ENCODE measurements at regions of chr6 and their contacts with region 1.

Region 1: GRCh38 chr6:136643850-136644596 is 93.8 kb upstream of the MAP7 start:
- DNase-seq: peak; percentile 46
- H3K4me3 ChIP-seq: no peak overlapping the region
- CTCF ChIP-seq: peak; percentile 86

Region 2: GRCh38 chr6:136582711-136583471 is 61.1 kb before region 1 on chr6:
- CTCF ChIA-PET with region 1: interaction called, 32 read pairs
- POLR2A ChIA-PET with region 1: no interaction called
- DNase-seq: peak; percentile 63
- H3K4me3 ChIP-seq: no peak overlapping the region
- CTCF ChIP-seq: peak; percentile 19

Region 3: GRCh38 chr6:136607932-136608772 is 35.9 kb before region 1 on chr6:
- CTCF ChIA-PET with region 1: interaction called, 26 read pairs
- POLR2A ChIA-PET with region 1: interaction called, 5 read pairs
- DNase-seq: no peak
- H3K4me3 ChIP-seq: no peak overlapping the region
- CTCF ChIP-seq: peak; percentile 68

Region 4: DNA sequence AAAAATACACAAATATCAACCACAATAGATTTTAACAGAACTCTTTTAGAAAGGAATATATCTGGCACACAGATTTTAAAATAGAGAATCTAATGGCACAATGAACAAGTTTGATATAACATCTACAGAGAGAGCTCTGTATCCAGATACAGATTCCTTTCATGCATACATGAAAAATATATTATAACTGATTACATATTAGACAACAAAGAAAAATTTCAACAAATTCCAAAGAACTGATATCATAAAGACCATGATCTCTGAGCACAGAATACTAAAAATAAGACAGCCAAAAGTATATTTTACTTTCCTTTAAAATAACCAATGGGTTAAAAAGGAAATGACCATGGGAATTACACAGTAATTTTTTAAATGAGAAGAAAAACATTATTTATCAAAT is 19.7 kb before region 1 on chr6:
- CTCF ChIA-PET with region 1: interaction called, 50 read pairs
- POLR2A ChIA-PET with region 1: no interaction called
- DNase-seq: no peak
- H3K4me3 ChIP-seq: no peak overlapping the region
- CTCF ChIP-seq: no peak

Region 5: GRCh38 chr6:136657666-136658065 is 13.6 kb after region 1 on chr6:
- CTCF ChIA-PET with region 1: interaction called, 49 read pairs
- POLR2A ChIA-PET with region 1: no interaction called
- DNase-seq: no peak
- H3K4me3 ChIP-seq: no peak overlapping the region
- CTCF ChIP-seq: no peak

Region 6: GRCh38 chr6:136761227-136761922 is 117.4 kb after region 1 on chr6:
- CTCF ChIA-PET with region 1: interaction called, 10 read pairs
- POLR2A ChIA-PET with region 1: no interaction called
- DNase-seq: no peak
- H3K4me3 ChIP-seq: peak overlapping the region; percentile 29
- CTCF ChIP-seq: no peak

Region 7: GRCh38 chr6:136792410-136793262 is 148.6 kb after region 1 on chr6 and contains the start of gene MAP3K5:
- CTCF ChIA-PET with region 1: interaction called, 351 read pairs
- POLR2A ChIA-PET with region 1: no interaction called
- DNase-seq: no peak
- H3K4me3 ChIP-seq: peak within 1 kb of the TSS; percentile 86
- CTCF ChIP-seq: peak; percentile 98

Region 8: GRCh38 chr6:137025786-137026456 is 381.9 kb after region 1 on chr6:
- CTCF ChIA-PET with region 1: no interaction called
- POLR2A ChIA-PET with region 1: no interaction called
- DNase-seq: no peak
- H3K4me3 ChIP-seq: no peak overlapping the region
- CTCF ChIP-seq: no peak

Measured in AG04449 (cell line).